Dorsolateral prefrontal cortex (tissue), 120 donors: ENCODE measurements at regions of chr17 and their contacts with region 1.

Region 1: DNA sequence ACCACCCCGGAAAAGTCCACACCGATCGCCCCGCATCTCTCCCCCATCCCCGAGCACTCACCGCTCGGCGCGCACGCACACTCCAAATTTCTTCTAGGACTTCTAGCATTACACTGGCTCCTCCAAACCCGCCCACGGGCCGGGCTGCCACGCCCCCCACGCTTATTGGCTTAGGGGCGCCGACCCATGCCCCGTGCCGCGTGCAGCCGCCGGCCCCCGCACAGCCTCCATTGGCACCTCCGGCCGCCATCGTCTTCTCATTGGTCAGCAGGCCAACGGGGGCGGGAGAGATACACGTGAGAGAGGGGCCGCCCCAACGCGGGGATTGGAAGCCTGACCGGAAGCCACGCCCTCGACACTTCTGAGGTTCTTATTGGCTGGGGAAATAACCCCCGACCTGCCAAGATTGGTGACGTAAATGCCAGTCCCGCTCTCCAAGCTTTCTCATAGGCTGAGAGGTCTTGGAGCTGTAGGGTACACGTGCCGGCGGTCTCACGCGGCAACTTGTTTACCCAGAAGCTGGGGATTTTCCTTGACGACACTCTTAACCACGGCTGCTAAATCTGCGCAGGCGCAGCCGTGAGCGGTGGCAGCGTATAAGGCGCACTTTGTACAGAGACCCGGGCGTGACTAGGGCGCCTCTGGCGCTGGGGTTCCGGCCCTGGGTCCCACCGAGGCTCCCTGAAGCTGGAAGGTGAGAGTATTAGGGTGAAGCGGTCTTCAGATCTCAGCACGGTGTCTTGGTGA is 4.2 kb upstream of the PER1 start:
- DNase-seq: peak; percentile 98 to 100 (median 99)
- H3K4me3 ChIP-seq: peak overlapping the region; percentile 60 to 98 (median 87)
- H3K27ac ChIP-seq: peak overlapping the region; percentile 90 to 100 (median 100)
- H3K27me3 ChIP-seq: no peaks in the 10 kb centered on the region
- CTCF ChIP-seq: peak in 36 of 56 donors; percentile 9 to 56 (median 32)

Region 2: GRCh38 chr17:7844292-7845154 is 311.9 kb before region 1 on chr17:
- intact Hi-C with region 1: loop called in 1 of 2 experiments (anchors 10 kb)
- DNase-seq: peak; percentile 85 to 95 (median 94)
- H3K4me3 ChIP-seq: peak overlapping the region; percentile 65 to 94 (median 85)
- H3K27ac ChIP-seq: peak overlapping the region; percentile 44 to 100 (median 98)
- H3K27me3 ChIP-seq: no peaks in the 10 kb centered on the region
- CTCF ChIP-seq: peak in 16 of 56 donors; percentile 7 to 52 (median 20)

Region 3: DNA sequence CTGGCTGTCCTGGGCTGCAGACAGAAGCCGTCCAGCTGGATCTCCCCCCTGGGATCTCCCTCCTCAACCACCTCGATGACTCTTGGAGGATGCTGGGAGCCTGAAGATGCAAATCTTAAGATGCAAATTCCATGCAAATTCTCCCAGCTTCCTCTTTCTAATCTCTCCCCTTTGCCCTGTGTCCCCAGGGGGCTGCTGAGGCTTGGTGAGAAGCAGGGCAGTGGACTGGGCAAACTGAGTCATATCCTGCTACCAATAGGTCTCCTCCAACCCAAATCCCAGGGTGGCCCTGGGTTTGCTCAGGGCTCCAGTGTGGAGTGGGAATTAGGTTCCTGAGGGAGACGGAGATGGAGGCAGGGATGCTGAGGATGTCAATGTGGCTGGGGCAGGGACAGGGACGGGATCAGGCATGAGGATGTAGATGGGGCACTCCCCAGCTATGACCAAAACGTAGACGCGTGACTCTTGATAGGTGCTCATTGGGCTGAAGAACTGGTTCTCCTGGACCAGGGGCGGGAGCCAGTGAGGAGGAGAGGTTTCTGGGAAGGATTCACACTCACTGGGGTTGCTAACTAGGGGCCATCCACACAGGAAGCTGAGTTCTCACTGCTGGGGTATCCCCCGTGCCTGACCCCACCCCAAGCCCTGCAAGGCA is 65.3 kb before region 1 on chr17:
- intact Hi-C with region 1: no loop called
- DNase-seq: no peak
- H3K4me3 ChIP-seq: no peak overlapping the region
- H3K27ac ChIP-seq: no peak overlapping the region
- H3K27me3 ChIP-seq: peaks cover 0 to 24% (median 3%) of the 10 kb centered on the region in 45 donors
- CTCF ChIP-seq: no peak